Activated CD4-positive, alpha-beta memory T cell treated with anti-CD3 and anti-CD28 coated beads, Interleukin-2, amount 10 ng/mL, durations not matched to agents 7 days and 5 days (primary cell): ENCODE measurements at regions of chr1 and their contacts with region 1.

Region 1: GRCh38 chr1:2174348-2175054 is 20.1 kb downstream of the FAAP20 start:
- DNase-seq: peak; percentile 45
- H3K4me3 Mint-ChIP-seq: peak overlapping the region; percentile 24
- H3K27ac Mint-ChIP-seq: no peak overlapping the region
- H3K4me1 Mint-ChIP-seq: peaks cover 2% of the 10 kb centered on the region
- H3K27me3 Mint-ChIP-seq: no peaks in the 10 kb centered on the region

Region 2: DNA sequence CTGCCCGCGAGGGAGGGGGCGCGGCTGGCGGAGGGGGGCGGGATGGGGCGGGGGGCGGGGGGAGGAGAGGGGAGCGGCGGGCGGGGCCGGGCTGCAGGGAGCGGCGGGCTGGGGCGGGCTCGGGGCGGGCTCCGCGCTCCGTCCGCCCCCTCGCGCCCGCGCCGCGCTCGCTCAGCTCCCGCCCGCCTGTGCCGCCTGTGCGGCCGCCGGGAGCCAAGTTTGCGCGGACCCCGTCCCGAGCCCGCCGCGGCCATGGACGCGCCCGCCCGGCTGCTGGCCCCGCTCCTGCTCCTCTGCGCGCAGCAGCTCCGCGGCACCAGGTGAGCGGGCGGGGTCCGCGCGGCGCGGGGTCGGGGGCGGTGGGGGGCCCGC is 155.3 kb before region 1 on chr1 and contains the start of gene GABRD:
- CTCF ChIA-PET with region 1: no interaction called
- POLR2A ChIA-PET with region 1: no interaction called
- DNase-seq: no peak
- H3K4me3 Mint-ChIP-seq: no peak within 1 kb of the TSS
- H3K27ac Mint-ChIP-seq: no peak within 1 kb of the TSS
- H3K4me1 Mint-ChIP-seq: peaks cover 2% of the 10 kb centered on the region
- H3K27me3 Mint-ChIP-seq: peaks cover 59% of the 10 kb centered on the region
- total RNA-seq, gene GABRD: not detected

Region 3: DNA sequence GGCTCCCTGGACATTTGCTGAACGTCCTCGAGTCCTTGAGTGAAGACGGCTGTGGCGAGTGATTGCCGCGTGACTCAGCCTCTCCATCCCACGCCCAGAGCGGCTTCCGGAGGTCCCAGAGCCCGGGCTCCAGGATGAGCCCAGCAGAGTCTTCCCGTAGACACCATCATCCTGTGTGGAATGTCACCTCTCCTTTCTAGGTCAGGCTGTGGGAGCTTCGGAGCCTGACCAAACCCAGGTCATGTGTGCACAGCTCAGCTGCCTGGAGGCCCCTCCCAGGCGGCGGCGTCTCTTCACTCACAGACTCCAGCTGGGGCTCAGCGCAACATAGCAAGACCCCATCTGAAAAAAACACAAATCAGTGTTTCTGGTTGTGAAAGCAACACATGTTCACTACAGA is 86.0 kb before region 1 on chr1:
- CTCF ChIA-PET with region 1: interaction called, 14 read pairs
- POLR2A ChIA-PET with region 1: no interaction called
- DNase-seq: no peak
- H3K4me3 Mint-ChIP-seq: no peak overlapping the region
- H3K27ac Mint-ChIP-seq: no peak overlapping the region
- H3K4me1 Mint-ChIP-seq: no peaks in the 10 kb centered on the region
- H3K27me3 Mint-ChIP-seq: peaks cover 3% of the 10 kb centered on the region

Region 4: DNA sequence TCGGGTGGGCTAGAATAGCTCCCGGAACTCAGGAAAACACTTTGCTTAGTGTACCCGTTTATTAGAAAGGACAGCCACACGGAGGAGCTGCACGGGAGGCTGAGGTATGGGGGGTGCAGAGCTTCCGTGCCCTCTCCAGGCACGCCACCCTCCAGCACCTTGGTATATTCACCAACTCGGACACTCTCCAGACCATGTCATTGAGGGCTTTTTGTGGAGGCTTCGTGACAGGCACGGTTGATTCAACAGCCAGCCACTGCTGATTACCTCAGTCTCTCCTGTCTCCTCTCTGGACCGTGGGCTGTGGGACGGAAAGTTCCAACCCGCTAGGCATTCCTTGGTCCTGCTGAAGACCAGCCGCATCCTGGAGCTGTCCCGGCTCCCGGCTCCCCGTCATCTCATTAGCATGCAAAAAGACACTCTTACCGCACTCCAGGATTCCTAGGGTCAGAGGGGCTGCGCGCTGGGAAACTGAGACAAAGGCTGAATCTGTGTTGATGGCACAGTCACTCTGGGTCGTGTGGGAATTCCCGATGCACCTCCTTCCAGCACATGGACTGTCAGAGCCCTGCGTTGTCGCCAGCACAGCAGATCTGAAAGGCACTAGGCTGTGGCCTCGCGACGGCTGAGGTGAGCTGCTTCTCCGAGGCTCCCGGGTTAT is 58.7 kb before region 1 on chr1:
- CTCF ChIA-PET with region 1: interaction called, 12 read pairs
- POLR2A ChIA-PET with region 1: no interaction called
- DNase-seq: no peak
- H3K4me3 Mint-ChIP-seq: no peak overlapping the region
- H3K27ac Mint-ChIP-seq: no peak overlapping the region
- H3K4me1 Mint-ChIP-seq: peaks cover 5% of the 10 kb centered on the region
- H3K27me3 Mint-ChIP-seq: no peaks in the 10 kb centered on the region

Region 5: GRCh38 chr1:2133039-2133878 is 41.2 kb before region 1 on chr1:
- CTCF ChIA-PET with region 1: interaction called, 20 read pairs
- POLR2A ChIA-PET with region 1: no interaction called
- DNase-seq: peak; percentile 98
- H3K4me3 Mint-ChIP-seq: peak overlapping the region; percentile 72
- H3K27ac Mint-ChIP-seq: peak overlapping the region; percentile 60
- H3K4me1 Mint-ChIP-seq: peaks cover 10% of the 10 kb centered on the region
- H3K27me3 Mint-ChIP-seq: no peaks in the 10 kb centered on the region

Region 6: DNA sequence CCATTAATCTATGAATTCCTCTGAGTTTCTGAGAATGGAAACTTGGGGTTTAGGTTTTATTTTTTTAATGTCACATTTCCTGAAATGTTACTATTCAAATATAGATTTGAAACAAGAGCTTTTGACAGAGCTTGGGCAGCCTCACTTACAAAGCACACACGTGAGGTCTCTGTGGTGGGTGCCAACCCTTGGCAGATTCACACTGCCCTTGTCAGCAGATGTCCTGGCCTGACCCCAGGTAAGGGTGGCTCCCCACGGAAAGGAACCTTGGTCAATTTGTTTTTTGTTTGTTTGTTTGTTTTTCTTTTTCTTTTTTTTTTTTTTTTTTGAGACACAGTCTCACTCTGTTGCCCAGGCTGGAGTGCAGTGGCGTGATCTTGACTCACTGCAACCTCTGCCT is 33.5 kb before region 1 on chr1:
- CTCF ChIA-PET with region 1: interaction called, 23 read pairs
- POLR2A ChIA-PET with region 1: no interaction called
- DNase-seq: no peak
- H3K4me3 Mint-ChIP-seq: no peak overlapping the region
- H3K27ac Mint-ChIP-seq: no peak overlapping the region
- H3K4me1 Mint-ChIP-seq: peaks cover 7% of the 10 kb centered on the region
- H3K27me3 Mint-ChIP-seq: no peaks in the 10 kb centered on the region

Region 7: DNA sequence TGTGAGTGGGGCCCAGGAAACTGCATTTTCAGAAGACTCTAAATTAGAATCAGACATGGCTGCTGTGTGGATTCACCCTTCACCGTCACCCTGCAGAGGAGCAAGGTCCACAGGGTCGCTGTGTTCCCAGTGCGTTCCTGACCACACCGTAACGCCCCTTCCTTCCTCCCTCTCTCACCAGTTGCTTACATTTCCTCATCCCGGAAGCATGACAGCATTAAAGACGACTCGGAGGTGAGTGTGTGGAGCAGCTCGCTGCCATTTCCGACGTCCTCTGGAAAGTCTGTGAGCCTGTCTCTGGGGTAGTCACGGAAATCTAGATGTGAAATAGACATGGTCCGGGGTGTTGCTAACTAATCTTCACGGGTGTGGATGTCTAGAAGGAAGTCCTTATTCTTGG is 25.8 kb before region 1 on chr1:
- CTCF ChIA-PET with region 1: interaction called, 21 read pairs
- POLR2A ChIA-PET with region 1: interaction called, 3 read pairs
- DNase-seq: peak; percentile 84
- H3K4me3 Mint-ChIP-seq: no peak overlapping the region
- H3K27ac Mint-ChIP-seq: no peak overlapping the region
- H3K4me1 Mint-ChIP-seq: peaks cover 13% of the 10 kb centered on the region
- H3K27me3 Mint-ChIP-seq: no peaks in the 10 kb centered on the region

Region 8: GRCh38 chr1:2163205-2163604 is 11.3 kb before region 1 on chr1:
- CTCF ChIA-PET with region 1: interaction called, 12 read pairs
- POLR2A ChIA-PET with region 1: no interaction called
- DNase-seq: no peak
- H3K4me3 Mint-ChIP-seq: no peak overlapping the region
- H3K27ac Mint-ChIP-seq: no peak overlapping the region
- H3K4me1 Mint-ChIP-seq: no peaks in the 10 kb centered on the region
- H3K27me3 Mint-ChIP-seq: no peaks in the 10 kb centered on the region

Region 9: DNA sequence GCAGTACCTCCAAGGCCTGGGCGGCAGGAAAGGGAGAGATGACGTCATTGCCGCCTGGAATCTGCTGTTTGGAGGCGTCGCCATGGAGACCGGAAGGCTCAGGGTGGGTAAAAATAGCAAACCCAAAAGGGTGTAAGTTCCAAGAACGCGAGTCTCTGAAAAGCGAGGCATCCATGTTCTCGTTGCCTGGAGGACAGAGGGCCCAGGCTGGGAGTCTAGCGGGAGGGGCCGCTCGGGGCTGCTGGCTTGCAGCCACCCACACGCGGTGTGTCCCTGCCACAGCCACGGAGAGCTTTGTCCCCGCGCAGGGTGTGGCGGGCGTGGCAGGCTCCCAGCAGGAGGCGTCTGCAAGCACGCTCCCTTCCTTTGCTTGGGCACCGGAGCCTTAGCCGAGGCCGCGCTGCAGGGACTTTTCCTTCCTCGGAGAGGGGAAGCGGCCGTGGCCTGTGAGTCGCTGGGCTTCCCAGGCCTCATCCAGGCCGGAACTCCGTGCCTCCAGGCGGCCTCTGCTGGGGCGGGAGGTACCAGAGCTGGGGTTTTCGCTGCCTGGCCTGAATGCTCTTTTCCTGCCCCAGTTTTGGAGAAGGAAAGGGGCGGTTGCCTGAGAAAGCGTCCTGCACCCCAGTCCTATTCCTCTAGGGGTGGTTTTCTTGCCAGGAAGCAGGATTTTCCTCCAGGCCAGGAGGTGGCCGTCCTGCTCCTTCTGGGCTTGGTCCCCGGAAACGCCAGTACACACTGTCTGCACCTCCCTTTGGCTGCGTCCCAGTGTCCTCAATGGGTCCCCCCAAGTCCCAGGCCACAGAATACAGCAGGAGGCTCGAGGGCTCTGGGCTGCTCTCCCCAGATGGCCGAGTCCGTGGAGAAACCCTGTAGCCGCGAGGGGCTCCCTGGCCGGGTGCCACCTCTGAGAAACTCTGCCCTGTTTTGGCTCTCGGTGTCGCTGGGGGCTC is 38.3 kb after region 1 on chr1:
- CTCF ChIA-PET with region 1: no interaction called
- POLR2A ChIA-PET with region 1: no interaction called
- DNase-seq: peak; percentile 75
- H3K4me3 Mint-ChIP-seq: no peak overlapping the region
- H3K27ac Mint-ChIP-seq: no peak overlapping the region
- H3K4me1 Mint-ChIP-seq: peaks cover 10% of the 10 kb centered on the region
- H3K27me3 Mint-ChIP-seq: no peaks in the 10 kb centered on the region